Activated T-helper 1 cell treated with anti-CD3 and anti-CD28 coated beads, Interleukin-12 subunit alpha, Interleukin-12 subunit beta, Interleukin-2, Interleukin-4 antibody, amounts not matched to agents 30 ng/mL and 10 ng/mL and 1 ng/mL, durations not matched to agents 14 hours and 24 hours and 36 hours (primary cell): ENCODE measurements at regions of chr12 and their contacts with region 1.

Region 1: DNA sequence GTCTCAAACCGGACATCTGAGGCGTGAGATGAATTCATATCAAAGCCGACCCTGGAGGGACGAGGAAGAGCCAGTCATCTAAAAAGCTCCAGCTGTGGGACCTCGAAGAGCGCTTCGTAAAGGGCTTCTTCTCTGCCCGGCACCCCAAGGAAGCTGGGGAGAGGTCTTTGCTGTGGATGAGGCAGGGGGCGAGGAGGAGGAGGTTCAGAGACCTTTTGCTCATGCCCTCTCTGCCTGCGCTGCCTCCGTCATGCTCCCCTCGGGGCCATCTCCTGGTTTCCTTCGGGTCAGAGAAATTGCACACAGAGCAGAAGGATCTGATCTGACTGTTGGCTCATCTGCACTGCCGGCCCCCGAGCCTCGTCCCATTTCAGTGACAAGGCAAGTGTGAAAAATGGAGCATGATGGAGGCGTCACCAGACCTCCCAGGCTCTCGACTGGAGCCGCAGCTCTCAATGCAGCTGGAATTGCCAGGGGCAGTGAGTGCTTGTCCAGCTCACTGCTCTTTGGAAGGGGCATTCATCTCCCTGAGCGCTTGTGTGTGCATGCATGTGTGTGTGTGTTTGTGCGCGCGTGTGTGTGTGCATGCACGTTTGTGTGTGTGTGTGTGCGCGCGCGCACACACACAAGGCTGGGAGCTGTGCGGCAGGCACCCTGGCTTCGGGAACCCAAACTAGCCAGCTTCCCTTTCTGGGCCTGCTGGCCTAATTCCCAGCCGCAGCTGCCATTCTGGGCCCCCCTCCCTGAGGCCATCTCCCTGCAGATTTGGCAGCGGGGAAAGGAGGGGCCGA is 9.2 kb downstream of the CABP1 start:
- DNase-seq: no peak
- H3K4me3 Mint-ChIP-seq: no peak overlapping the region
- H3K27ac Mint-ChIP-seq: no peak overlapping the region
- H3K4me1 Mint-ChIP-seq: peaks cover 15% of the 10 kb centered on the region
- H3K27me3 Mint-ChIP-seq: peaks cover 54% of the 10 kb centered on the region

Region 2: DNA sequence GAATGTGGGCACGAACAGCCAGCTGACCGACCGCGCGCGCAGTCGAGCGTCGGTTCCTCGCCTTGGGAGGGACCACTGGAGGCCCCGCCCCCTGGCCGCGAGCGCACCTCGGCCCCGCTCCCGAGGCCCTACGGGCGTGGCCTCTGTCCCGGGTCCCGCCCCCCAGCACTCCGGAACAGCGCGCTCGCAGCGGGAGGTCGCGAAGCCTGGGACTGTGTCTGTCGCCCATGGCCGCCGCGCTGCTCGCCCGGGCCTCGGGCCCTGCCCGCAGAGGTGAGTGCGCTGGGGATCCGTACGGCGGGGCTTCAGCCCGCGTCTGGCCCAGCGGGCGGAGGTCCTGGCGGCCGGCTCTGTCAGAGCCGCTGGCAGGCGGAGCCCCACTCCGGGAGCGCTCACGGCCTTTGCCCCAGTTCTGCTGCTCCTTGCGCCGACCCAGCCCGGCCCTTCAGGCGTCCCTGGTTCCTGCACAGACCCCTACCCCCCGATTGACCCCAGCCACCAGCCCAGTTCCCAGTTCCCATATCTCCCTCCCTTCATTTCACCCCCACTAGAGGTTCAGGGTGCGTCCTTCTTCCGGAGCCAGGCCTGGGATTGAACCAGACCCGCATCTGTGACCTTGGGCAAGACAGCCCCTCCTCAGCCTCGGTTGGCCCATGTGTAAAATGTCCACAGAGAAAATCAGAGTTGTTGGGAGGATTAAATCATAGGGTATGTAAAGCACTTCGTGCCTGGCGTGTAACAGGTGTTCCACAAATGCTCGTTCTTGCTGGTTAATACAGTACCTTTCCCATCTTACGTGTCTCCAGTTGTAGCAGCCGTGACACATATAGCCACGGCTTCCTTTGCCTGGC is 76.2 kb after region 1 on chr12 and contains the start of gene ACADS:
- intact Hi-C with region 1: loop called (anchors 1 kb)
- DNase-seq: peak; percentile 89
- H3K4me3 Mint-ChIP-seq: peak within 1 kb of the TSS; percentile 94
- H3K27ac Mint-ChIP-seq: peak within 1 kb of the TSS; percentile 87
- H3K4me1 Mint-ChIP-seq: peaks cover 22% of the 10 kb centered on the region
- H3K27me3 Mint-ChIP-seq: no peaks in the 10 kb centered on the region
- total RNA-seq, gene ACADS: 10.8 and 11.1 TPM in 2 replicates

Region 3: GRCh38 chr12:120801146-120801545 is 151.5 kb after region 1 on chr12:
- intact Hi-C with region 1: no loop called
- DNase-seq: no peak
- H3K4me3 Mint-ChIP-seq: no peak overlapping the region
- H3K27ac Mint-ChIP-seq: no peak overlapping the region
- H3K4me1 Mint-ChIP-seq: peaks cover 48% of the 10 kb centered on the region
- H3K27me3 Mint-ChIP-seq: no peaks in the 10 kb centered on the region